ENCODE measurements at regions of chr2 and their contacts with region 1.

Region 1: GRCh38 chr2:227411320-227411989 is 23.7 kb upstream of the SCYGR1 start:
- DNase-seq: peak; percentile 83
- H3K4me3 Mint-ChIP-seq: peak overlapping the region; percentile 51
- H3K27ac Mint-ChIP-seq: peak overlapping the region; percentile 96
- H3K4me1 Mint-ChIP-seq: peaks cover 76% of the 10 kb centered on the region
- H3K27me3 Mint-ChIP-seq: no peaks in the 10 kb centered on the region

Region 2: DNA sequence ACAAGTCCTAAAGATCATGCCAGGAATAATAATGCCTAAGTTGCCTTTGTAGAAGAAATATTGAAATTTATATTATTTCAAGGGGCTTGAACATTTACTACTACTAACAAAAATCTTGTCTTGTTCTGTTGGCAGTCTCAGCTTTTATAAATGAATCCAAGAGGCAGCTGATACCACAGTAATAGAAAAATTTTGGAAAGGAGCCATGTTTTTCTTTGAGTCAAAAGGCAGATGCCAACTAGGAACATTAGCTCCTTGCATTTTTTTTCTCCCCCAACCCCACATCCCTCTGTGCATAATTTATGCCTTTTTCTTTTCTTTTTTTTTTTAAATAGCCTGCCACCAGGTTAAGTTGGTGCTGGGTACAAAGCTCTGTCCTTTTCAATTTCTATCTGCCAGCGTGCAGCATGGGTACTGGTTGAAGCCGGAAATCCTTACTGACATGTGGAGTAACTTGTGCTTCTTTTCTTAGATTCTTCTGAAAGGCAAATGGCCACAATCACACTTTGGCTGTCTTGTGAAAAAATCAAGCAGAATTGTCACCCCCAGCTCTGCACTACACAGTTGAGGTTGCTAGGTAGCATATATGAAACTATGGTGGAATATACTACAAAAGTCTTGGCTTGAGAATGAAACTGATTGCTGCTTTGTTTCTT is 476.8 kb before region 1 on chr2:
- CTCF ChIA-PET with region 1: no interaction called
- intact Hi-C with region 1: no loop called
- DNase-seq: no peak
- H3K4me3 Mint-ChIP-seq: no peak overlapping the region
- H3K27ac Mint-ChIP-seq: no peak overlapping the region
- H3K4me1 Mint-ChIP-seq: no peaks in the 10 kb centered on the region
- H3K27me3 Mint-ChIP-seq: no peaks in the 10 kb centered on the region

Region 3: GRCh38 chr2:227351639-227352038 is 59.8 kb before region 1 on chr2:
- CTCF ChIA-PET with region 1: no interaction called
- intact Hi-C with region 1: loop called (anchors 2 kb)
- DNase-seq: peak; percentile 45
- H3K4me3 Mint-ChIP-seq: peak overlapping the region; percentile 56
- H3K27ac Mint-ChIP-seq: peak overlapping the region; percentile 90
- H3K4me1 Mint-ChIP-seq: peaks cover 30% of the 10 kb centered on the region
- H3K27me3 Mint-ChIP-seq: no peaks in the 10 kb centered on the region

Region 4: DNA sequence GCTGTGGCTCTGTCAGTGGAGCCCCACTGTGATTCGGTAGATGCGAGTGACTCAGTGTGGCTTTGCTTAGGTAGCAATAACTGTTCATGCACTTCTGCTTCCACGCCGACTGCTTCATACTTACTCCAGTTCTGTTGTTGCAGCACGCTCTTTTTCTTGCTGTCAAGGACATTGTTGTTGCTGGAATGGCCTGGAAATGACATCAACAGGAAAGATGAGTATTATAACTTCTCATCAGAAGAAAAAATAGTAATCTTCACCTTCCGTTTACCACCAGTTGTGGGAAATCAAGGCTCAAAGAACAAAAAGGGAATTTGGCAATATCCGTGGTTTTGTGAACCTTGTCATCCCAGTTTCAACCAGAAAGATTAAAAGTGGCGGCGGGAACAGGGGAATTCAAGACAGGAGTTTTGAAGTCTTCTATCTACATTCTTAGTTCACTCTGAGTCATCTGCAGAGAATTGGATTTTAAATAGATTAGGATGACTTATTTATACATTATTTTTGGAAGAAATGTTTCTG is 40.6 kb before region 1 on chr2:
- CTCF ChIA-PET with region 1: no interaction called
- intact Hi-C with region 1: loop called (anchors 1 kb)
- DNase-seq: peak; percentile 44
- H3K4me3 Mint-ChIP-seq: no peak overlapping the region
- H3K27ac Mint-ChIP-seq: peak overlapping the region; percentile 22
- H3K4me1 Mint-ChIP-seq: peaks cover 25% of the 10 kb centered on the region
- H3K27me3 Mint-ChIP-seq: no peaks in the 10 kb centered on the region

Region 5: DNA sequence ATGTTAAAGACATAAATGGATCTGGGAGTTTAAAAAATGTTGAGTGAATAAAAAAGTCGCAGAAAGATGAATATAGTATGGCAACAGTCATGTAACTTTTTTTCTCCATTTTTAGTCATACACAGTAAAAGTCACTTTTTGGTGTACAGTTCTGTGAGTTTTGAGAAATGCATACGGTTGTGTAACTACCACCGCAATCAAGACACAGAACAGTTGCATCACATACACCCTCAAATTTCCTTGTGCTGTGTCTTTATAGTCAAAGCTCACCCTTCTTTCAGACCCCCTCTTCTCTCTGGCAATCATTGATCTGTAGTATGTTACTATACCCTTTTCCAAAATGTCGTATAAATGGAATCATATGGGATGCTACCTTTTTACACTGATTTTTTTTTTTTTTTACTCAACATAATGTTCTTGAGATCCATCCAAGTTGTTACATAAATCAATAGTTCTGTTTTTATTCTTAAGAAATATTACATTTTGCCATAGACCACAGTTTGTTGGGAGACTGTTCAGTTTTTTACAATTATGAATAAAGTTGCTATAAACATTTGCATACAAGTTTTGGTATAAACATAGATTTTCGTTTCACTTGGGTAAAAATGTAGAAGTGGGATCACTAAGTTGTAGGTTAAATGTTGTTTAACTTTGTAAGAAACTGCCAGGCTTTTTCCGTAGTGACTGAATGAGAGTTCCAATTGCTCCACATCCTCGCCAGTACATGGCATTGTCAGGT is 25.1 kb after region 1 on chr2:
- CTCF ChIA-PET with region 1: interaction called, 5 read pairs
- intact Hi-C with region 1: loop called (anchors 2 kb)
- DNase-seq: no peak
- H3K4me3 Mint-ChIP-seq: no peak overlapping the region
- H3K27ac Mint-ChIP-seq: no peak overlapping the region
- H3K4me1 Mint-ChIP-seq: no peaks in the 10 kb centered on the region
- H3K27me3 Mint-ChIP-seq: no peaks in the 10 kb centered on the region

Region 6: DNA sequence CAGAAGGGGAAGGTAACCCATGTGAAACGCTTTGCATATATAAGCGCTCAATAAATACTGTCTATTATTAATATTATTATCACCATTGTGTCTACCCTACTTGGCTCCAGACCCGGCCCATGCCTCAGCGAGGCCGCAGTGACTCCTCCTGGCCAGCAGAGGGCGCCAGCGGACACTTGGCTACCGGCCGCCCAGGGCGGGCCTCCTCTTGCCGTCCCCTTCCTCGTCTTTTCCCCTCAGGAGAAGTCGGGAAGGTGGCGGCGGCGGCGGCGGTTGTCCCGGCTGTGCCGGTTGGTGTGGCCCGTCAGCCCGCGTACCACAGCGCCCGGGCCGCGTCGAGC is 60.4 kb after region 1 on chr2 and contains the start of gene AGFG1:
- CTCF ChIA-PET with region 1: interaction called, 95 read pairs
- intact Hi-C with region 1: loop called (anchors 2 kb)
- DNase-seq: peak; percentile 89
- H3K4me3 Mint-ChIP-seq: peak within 1 kb of the TSS; percentile 93
- H3K27ac Mint-ChIP-seq: peak within 1 kb of the TSS; percentile 93
- H3K4me1 Mint-ChIP-seq: peaks cover 53% of the 10 kb centered on the region
- H3K27me3 Mint-ChIP-seq: no peaks in the 10 kb centered on the region
- total RNA-seq, gene AGFG1: 153 to 157 TPM

Region 7: GRCh38 chr2:227488045-227488444 is 76.6 kb after region 1 on chr2:
- CTCF ChIA-PET with region 1: interaction called, 4 read pairs
- intact Hi-C with region 1: loop called (anchors 1 kb)
- DNase-seq: no peak
- H3K4me3 Mint-ChIP-seq: no peak overlapping the region
- H3K27ac Mint-ChIP-seq: peak overlapping the region; percentile 73
- H3K4me1 Mint-ChIP-seq: peaks cover 71% of the 10 kb centered on the region
- H3K27me3 Mint-ChIP-seq: no peaks in the 10 kb centered on the region

Measured in activated naive CD4-positive, alpha-beta T cell treated with anti-CD3 and anti-CD28 coated beads for 36 hours (primary cell).